ENCODE measurements at regions of chr2 and their contacts with region 1.

Region 1: GRCh38 chr2:181904022-181904632 is 12.6 kb downstream of the ITPRID2 start:
- DNase-seq: no peak
- ATAC-seq: peak in 1 of 2 donors; percentile 56
- H3K4me3 ChIP-seq: no peak overlapping the region
- H3K27ac ChIP-seq: no peak overlapping the region
- H3K4me1 ChIP-seq: peaks cover 47% of the 10 kb centered on the region
- H3K27me3 ChIP-seq: no peaks in the 10 kb centered on the region
- CTCF ChIP-seq: peak; percentile 54

Region 2: DNA sequence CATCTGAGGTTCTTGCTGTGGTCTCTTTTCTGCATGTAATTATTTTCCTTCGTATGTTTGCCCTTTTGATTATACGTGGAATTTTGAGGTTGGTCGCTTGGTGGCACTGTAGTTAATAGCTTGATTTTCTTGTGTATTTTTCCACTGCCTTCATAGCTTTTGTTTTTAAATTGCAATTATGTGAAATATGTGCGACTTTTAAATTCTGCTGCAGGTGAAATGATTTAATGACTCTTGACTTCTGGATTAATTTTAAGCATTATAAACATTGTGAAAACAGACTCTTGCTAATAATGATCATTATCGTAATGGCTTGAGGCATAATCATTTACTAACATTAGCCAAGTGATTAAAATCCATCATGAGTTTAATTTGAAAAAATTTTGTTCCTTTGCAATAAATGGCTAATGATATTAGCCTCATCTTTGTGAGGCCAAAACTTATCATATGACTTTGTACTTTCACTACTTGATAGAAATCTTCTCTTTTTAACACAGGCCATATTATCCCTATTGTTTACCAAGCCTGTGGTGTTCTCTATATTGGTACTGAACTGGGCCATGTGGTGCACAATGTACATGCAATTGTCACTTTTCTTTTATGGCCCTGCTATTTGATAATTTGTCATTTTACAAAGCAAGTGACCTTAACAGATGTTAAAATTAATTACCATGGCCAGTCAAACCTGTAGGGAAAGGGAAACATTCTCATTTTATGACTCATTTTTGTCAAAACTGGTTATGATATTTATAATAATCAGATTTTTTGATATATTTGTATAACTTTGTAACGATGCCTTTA is 161.0 kb before region 1 on chr2:
- intact Hi-C with region 1: loop called (anchors 10 kb)
- DNase-seq: no peak
- ATAC-seq: peak in 1 of 2 donors; percentile 80
- H3K4me3 ChIP-seq: no peak overlapping the region
- H3K27ac ChIP-seq: no peak overlapping the region
- H3K4me1 ChIP-seq: peaks cover 7% of the 10 kb centered on the region
- H3K27me3 ChIP-seq: no peaks in the 10 kb centered on the region
- CTCF ChIP-seq: peak; percentile 69

Region 3: GRCh38 chr2:182064019-182064778 is 160.1 kb after region 1 on chr2:
- intact Hi-C with region 1: no loop called
- DNase-seq: no peak
- ATAC-seq: no peak
- H3K4me3 ChIP-seq: no peak overlapping the region
- H3K27ac ChIP-seq: no peak overlapping the region
- H3K4me1 ChIP-seq: no peaks in the 10 kb centered on the region
- H3K27me3 ChIP-seq: no peaks in the 10 kb centered on the region
- CTCF ChIP-seq: no peak

Region 4: GRCh38 chr2:182077451-182078142 is 173.5 kb after region 1 on chr2:
- intact Hi-C with region 1: loop called (anchors 5 kb)
- DNase-seq: no peak
- ATAC-seq: peak; percentile 96 to 99
- H3K4me3 ChIP-seq: no peak overlapping the region
- H3K27ac ChIP-seq: no peak overlapping the region
- H3K4me1 ChIP-seq: no peaks in the 10 kb centered on the region
- H3K27me3 ChIP-seq: no peaks in the 10 kb centered on the region
- CTCF ChIP-seq: peak; percentile 67